A673 (cell line): ENCODE measurements at regions of chr10 and their contacts with region 1.

Region 1: DNA sequence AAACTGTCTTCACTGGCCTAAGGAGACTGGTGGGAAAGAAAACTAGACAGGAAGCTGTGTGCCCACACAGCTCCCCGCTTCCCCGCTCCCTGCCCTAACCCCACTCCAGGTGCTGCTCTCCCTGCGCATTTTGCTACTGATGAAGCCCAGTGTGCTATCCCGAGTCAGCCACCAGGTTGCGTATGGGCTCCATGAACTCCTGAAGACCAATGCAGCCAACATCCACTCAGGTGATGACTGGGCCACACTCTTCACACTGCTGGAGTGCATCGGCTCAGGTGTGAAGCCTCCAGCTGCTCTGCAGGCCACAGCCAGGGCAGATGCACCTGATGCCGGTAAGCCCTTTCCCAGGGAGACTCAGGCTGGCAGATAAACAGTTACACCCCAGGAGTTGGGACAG is 20.3 kb upstream of the NFKB2 start:
- DNase-seq: no peak
- H3K4me3 ChIP-seq: no peak overlapping the region
- H3K27ac ChIP-seq: no peak overlapping the region
- H3K4me1 ChIP-seq: no peaks in the 10 kb centered on the region
- H3K27me3 ChIP-seq: no peaks in the 10 kb centered on the region
- CTCF ChIP-seq: no peak

Region 2: DNA sequence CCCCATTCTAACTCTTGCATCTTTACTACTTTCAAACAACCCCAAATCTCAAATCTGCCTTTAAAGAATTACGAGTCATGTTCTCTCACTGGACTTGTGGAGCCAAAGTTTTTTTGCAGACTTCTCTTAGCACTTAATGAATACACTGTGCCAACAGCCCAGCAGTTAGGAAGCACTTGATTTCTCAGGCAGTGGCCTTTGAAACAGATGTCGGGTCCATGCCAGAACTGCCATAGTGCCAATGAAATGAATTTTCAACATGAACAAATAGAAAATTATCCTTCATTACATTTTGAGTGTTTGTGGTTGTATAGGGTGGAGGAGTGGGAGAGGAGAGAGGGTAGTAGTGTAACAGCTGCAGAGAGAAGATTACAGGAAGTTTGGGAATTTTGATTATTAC is 484.7 kb after region 1 on chr10:
- CTCF ChIA-PET with region 1: no interaction called
- POLR2A ChIA-PET with region 1: no interaction called
- intact Hi-C with region 1: no loop called
- DNase-seq: no peak
- H3K4me3 ChIP-seq: no peak overlapping the region
- H3K27ac ChIP-seq: no peak overlapping the region
- H3K4me1 ChIP-seq: peaks cover 12% of the 10 kb centered on the region
- H3K27me3 ChIP-seq: no peaks in the 10 kb centered on the region
- CTCF ChIP-seq: no peak

Region 3: DNA sequence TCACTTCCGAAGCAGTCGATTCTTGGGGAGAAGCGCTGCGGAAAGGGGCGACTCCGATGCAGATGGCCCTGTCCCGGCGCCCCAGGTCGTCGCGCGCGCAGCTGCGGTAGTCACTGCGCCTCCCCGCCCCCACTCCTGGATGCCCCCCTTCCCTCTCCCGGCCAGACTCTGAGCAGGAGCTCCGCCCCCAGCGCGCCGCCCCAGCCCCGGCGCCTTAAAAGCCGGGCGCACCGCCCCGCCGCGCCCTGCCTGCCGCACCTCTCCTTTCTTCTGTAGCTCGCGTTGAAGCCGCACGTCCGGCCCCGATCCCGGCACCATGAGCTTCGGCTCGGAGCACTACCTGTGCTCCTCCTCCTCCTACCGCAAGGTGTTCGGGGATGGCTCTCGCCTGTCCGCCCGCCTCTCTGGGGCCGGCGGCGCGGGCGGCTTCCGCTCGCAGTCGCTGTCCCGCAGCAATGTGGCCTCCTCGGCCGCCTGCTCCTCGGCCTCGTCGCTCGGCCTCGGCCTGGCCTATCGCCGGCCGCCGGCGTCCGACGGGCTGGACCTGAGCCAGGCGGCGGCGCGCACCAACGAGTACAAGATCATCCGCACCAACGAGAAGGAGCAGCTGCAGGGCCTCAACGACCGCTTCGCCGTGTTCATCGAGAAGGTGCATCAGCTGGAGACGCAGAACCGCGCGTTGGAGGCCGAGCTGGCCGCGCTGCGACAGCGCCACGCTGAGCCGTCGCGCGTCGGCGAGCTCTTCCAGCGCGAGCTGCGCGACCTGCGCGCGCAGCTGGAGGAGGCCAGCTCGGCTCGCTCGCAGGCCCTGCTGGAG is 901.9 kb after region 1 on chr10 and contains the start of gene INA:
- CTCF ChIA-PET with region 1: interaction called, 14 read pairs
- POLR2A ChIA-PET with region 1: no interaction called
- intact Hi-C with region 1: no loop called
- DNase-seq: peak; percentile 90
- H3K4me3 ChIP-seq: peak within 1 kb of the TSS; percentile 57
- H3K27ac ChIP-seq: no peak within 1 kb of the TSS
- H3K4me1 ChIP-seq: peaks cover 20% of the 10 kb centered on the region
- H3K27me3 ChIP-seq: peaks cover 18% of the 10 kb centered on the region
- CTCF ChIP-seq: 0 out of 2 replicates have a peak, but pooled peaks have one; percentile 17
- total RNA-seq, gene INA: 14.1 and 16.2 TPM in 2 replicates